ENCODE measurements at regions of chr7 and their contacts with region 1.

Region 1: GRCh38 chr7:137169282-137169698 is 174.2 kb downstream of the PTN start:
- DNase-seq: peak; percentile 3 to 12
- ATAC-seq: no peak
- H3K4me3 ChIP-seq: no peak overlapping the region
- H3K27ac ChIP-seq: no peak overlapping the region
- H3K4me1 ChIP-seq: no peaks in the 10 kb centered on the region
- H3K27me3 ChIP-seq: no peaks in the 10 kb centered on the region
- CTCF ChIP-seq: peak in 1 of 5 experiments; percentile 24
- POLR2A ChIP-seq: no peak

Region 2: DNA sequence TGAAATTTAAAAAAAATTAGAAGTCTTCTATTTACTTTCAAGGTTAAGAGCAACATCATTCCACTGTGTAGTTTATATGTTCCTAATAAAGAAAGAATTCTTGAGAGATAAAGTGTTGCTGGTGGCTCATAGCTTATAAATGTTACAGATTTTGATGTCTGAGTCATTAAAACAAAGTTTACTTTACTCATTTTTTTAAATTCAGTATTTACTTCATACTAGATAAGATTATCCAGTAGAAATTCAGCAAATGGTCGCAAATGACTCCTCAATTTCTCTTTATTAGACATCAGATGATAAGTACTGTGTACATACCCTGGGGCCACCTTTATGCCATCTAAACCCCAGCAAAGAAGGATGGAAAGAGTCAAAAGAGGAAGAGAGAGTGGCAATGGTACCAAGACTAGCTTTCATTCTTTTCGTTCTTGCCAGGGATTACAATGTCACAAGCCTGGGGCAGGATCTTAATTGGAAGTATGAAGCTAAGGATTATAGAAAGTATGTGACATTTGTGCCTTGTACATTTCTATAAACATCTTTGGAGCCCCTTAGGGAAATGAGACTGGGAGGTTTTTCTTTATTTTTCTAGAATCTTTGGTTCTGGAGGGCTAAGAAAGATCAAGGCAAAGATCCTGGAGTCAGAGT is 94.8 kb before region 1 on chr7:
- in situ Hi-C with region 1: no loop called
- intact Hi-C with region 1: no loop called
- DNase-seq: no peak
- ATAC-seq: no peak
- H3K4me3 ChIP-seq: no peak overlapping the region
- H3K27ac ChIP-seq: no peak overlapping the region
- H3K4me1 ChIP-seq: no peaks in the 10 kb centered on the region
- H3K27me3 ChIP-seq: no peaks in the 10 kb centered on the region
- CTCF ChIP-seq: no peak
- POLR2A ChIP-seq: no peak

Region 3: GRCh38 chr7:137221467-137221866 is 52.2 kb after region 1 on chr7:
- in situ Hi-C with region 1: no loop called
- intact Hi-C with region 1: no loop called
- DNase-seq: no peak
- ATAC-seq: no peak
- H3K4me3 ChIP-seq: no peak overlapping the region
- H3K27ac ChIP-seq: no peak overlapping the region
- H3K4me1 ChIP-seq: no peaks in the 10 kb centered on the region
- H3K27me3 ChIP-seq: no peaks in the 10 kb centered on the region
- CTCF ChIP-seq: no peak
- POLR2A ChIP-seq: no peak

Region 4: DNA sequence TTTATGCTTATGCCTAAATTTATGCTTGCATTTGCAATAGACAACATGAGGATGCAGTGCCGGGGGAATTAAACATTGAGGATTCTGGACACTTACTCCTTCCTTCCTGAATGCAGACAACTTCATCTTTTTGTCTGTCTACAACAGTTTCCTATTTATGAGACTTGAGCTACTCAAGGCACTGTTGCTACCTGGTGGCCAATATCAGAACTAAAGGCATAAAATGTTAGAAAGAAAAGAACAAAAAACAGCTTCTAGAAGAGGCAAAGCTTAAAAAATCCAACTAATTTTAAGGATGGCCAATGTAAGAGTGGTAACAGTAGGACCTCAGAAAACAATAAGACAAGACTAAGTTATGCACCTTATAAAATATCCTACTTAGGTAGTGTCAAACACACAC is 318.7 kb after region 1 on chr7:
- in situ Hi-C with region 1: loop called in 1 of 4 experiments (anchors 25 kb)
- intact Hi-C with region 1: no loop called
- DNase-seq: no peak
- ATAC-seq: no peak
- H3K4me3 ChIP-seq: no peak overlapping the region
- H3K27ac ChIP-seq: no peak overlapping the region
- H3K4me1 ChIP-seq: no peaks in the 10 kb centered on the region
- H3K27me3 ChIP-seq: no peaks in the 10 kb centered on the region
- CTCF ChIP-seq: no peak
- POLR2A ChIP-seq: no peak

Region 5: GRCh38 chr7:137731436-137731835 is 562.1 kb after region 1 on chr7:
- in situ Hi-C with region 1: no loop called
- intact Hi-C with region 1: no loop called
- DNase-seq: no peak
- ATAC-seq: no peak
- H3K4me3 ChIP-seq: no peak overlapping the region
- H3K27ac ChIP-seq: no peak overlapping the region
- H3K4me1 ChIP-seq: no peaks in the 10 kb centered on the region
- H3K27me3 ChIP-seq: no peaks in the 10 kb centered on the region
- CTCF ChIP-seq: no peak
- POLR2A ChIP-seq: no peak